PC-3 (cell line): ENCODE measurements at regions of chr5 and their contacts with region 1.

Region 1: GRCh38 chr5:177113566-177114424 is 19.8 kb upstream of the NSD1 start:
- DNase-seq: peak; percentile 89
- ATAC-seq: peak; percentile 77
- H3K4me3 ChIP-seq: no peak overlapping the region
- H3K27ac ChIP-seq: no peak overlapping the region
- H3K4me1 ChIP-seq: no peaks in the 10 kb centered on the region
- H3K27me3 ChIP-seq: no peaks in the 10 kb centered on the region
- CTCF ChIP-seq: peak; percentile 98

Region 2: DNA sequence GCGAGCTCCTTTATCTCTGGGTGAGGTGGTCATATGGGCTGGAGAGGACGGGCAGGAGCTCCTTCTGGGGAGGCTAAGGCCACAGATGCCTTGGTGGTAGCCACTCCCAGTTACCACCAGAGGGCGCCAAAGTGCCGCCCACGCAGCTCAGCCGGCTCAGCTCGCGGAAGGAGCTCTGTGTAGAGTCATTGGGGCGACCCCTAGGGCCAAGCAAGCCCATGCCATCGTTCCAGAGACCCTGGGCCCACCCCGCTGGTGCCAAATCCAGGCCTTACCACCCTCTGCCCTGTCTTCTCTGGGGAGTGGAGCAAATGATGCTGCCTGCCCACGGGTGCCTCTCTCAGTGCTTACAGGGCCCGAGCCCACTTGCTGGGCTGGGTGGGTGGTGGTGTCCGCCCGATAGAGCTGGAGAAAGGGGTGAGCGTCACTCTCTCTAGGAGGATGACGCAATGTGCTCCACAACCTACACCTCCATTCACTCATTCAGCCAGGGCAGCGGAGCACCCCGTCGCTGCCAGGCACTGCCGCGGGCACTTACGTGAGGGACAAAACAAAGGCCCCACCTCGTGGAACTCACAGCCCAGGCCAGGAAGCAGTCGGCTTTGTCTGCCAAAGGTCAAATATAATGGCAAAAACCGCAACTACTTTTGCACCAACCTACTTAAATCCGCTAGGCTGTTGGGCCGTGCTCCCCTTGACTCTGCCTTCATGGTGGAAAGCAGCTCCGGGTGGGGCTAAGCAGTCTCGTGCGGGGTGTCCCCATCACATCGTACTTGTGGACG is 452.7 kb before region 1 on chr5:
- CTCF ChIA-PET with region 1: interaction called, 4 read pairs
- POLR2A ChIA-PET with region 1: no interaction called
- intact Hi-C with region 1: loop called (anchors 5 kb)
- DNase-seq: peak; percentile 82
- ATAC-seq: peak; percentile 92
- H3K4me3 ChIP-seq: no peak overlapping the region
- H3K27ac ChIP-seq: no peak overlapping the region
- H3K4me1 ChIP-seq: no peaks in the 10 kb centered on the region
- H3K27me3 ChIP-seq: no peaks in the 10 kb centered on the region
- CTCF ChIP-seq: peak; percentile 92

Region 3: GRCh38 chr5:177071666-177072385 is 42.0 kb before region 1 on chr5:
- CTCF ChIA-PET with region 1: interaction called, 19 read pairs
- POLR2A ChIA-PET with region 1: no interaction called
- intact Hi-C with region 1: loop called (anchors 1 kb)
- DNase-seq: peak; percentile 96
- ATAC-seq: peak; percentile 97
- H3K4me3 ChIP-seq: no peak overlapping the region
- H3K27ac ChIP-seq: no peak overlapping the region
- H3K4me1 ChIP-seq: no peaks in the 10 kb centered on the region
- H3K27me3 ChIP-seq: no peaks in the 10 kb centered on the region
- CTCF ChIP-seq: peak; percentile 96

Region 4: GRCh38 chr5:177133091-177133852 is 19.5 kb after region 1 on chr5 and contains the start of gene NSD1:
- CTCF ChIA-PET with region 1: interaction called, 8 read pairs
- POLR2A ChIA-PET with region 1: interaction called, 6 read pairs
- intact Hi-C with region 1: loop called (anchors 2 kb)
- DNase-seq: peak; percentile 75
- ATAC-seq: peak; percentile 60
- H3K4me3 ChIP-seq: peak within 1 kb of the TSS; percentile 79
- H3K27ac ChIP-seq: peak within 1 kb of the TSS; percentile 35
- H3K4me1 ChIP-seq: peaks cover 31% of the 10 kb centered on the region
- H3K27me3 ChIP-seq: no peaks in the 10 kb centered on the region
- CTCF ChIP-seq: no peak
- total RNA-seq, gene NSD1: 48.9 and 70.5 TPM in 2 replicates

Region 5: DNA sequence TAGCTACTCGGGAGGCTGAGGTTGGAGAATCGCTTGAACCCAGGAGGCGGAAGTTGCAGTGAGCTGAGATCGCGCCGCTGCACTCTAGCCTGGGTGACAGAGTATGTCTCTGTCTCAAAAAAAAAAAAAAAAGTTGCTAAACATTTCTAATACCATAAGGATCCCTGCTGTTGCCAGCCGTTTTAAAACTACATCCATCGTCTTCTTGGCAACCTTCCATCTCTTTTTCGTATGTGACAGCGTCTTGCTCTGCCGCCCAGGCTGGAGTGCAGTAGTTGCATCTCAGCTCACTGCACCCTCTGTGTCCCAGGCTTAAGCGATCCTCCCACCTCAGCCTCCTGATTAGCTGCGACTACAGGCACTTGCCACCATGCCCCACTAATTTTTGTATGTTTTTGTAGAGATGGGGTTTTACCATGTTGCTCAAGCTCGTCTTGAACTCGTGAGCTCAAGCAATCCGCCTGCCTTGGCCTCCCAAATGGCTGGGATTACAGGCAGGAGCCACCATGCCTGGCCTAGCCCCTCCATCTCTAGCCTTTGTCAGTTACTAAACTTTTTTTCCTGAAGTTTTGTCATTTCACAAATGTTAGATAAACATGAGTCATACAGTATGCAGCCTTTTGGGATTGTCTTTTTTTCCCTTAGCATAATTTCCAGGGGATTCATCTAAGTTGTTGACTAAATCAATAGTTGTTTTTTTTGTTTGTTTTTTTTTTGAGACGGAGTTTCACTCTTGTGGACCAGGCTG is 33.3 kb after region 1 on chr5:
- CTCF ChIA-PET with region 1: no interaction called
- POLR2A ChIA-PET with region 1: no interaction called
- intact Hi-C with region 1: no loop called
- DNase-seq: peak; percentile 44
- ATAC-seq: peak; percentile 75
- H3K4me3 ChIP-seq: no peak overlapping the region
- H3K27ac ChIP-seq: no peak overlapping the region
- H3K4me1 ChIP-seq: peaks cover 6% of the 10 kb centered on the region; the same call in 1 of the 2 replicates
- H3K27me3 ChIP-seq: no peaks in the 10 kb centered on the region
- CTCF ChIP-seq: no peak

Region 6: GRCh38 chr5:177194274-177194673 is 80.5 kb after region 1 on chr5:
- CTCF ChIA-PET with region 1: interaction called, 10 read pairs
- POLR2A ChIA-PET with region 1: no interaction called
- intact Hi-C with region 1: no loop called
- DNase-seq: peak; percentile 94
- ATAC-seq: peak; percentile 97
- H3K4me3 ChIP-seq: no peak overlapping the region
- H3K27ac ChIP-seq: peak overlapping the region; percentile 36; the same call in 1 of the 2 replicates
- H3K4me1 ChIP-seq: peaks cover 17% of the 10 kb centered on the region
- H3K27me3 ChIP-seq: no peaks in the 10 kb centered on the region
- CTCF ChIP-seq: no peak

Region 7: DNA sequence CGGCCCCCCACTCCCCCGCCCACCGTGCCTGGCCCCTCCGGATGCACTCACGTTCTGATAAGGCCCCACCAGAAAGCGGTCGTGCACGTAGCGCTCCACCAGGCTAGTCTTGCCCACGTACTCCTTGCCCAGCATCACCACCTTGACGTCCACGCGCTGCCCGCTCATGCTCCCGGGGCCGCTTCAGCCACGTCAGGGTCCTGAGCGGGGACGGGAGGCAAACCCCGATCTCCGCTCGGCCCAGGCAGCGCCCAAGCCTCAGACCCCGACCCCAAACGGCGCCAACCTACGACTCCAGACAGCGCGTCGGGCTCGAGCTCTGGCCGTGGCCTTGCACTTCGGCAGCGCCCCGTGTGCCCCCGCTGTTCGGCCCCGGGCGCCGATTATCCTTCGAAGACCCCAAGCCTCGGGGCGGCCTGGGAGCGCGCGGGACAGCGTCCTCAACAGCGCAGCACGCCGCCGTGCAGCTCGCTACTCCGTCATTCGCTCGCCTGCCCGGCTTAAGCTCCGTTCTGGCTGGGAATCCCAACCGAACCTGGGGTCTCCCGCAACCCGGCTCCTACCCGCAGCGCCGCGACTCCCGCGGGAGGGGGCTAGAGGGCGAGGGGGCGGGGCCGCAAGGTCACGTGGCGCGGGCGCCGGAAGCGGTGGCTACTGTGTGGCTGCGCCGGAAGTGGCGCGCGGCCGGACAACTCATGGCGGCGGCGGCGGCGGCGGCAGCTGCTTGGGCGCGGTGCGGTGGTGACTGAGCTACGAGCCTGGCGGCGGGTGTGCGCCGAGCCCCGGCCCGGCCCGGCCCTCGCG is 189.5 kb after region 1 on chr5 and contains the starts of genes PRELID1 and RAB24:
- CTCF ChIA-PET with region 1: interaction called, 5 read pairs
- POLR2A ChIA-PET with region 1: no interaction called
- intact Hi-C with region 1: loop called (anchors 1 kb)
- DNase-seq: peak; percentile 89
- ATAC-seq: peak; percentile 27
- H3K4me3 ChIP-seq: peak within 1 kb of the TSS; percentile 86
- H3K27ac ChIP-seq: peak within 1 kb of the TSS; percentile 92
- H3K4me1 ChIP-seq: peaks cover 53% of the 10 kb centered on the region
- H3K27me3 ChIP-seq: no peaks in the 10 kb centered on the region
- CTCF ChIP-seq: peak; percentile 46
- total RNA-seq, gene PRELID1: 496 and 505 TPM in 2 replicates
- total RNA-seq, gene RAB24: 40.3 and 41.1 TPM in 2 replicates

Region 8: GRCh38 chr5:177336112-177336511 is 222.3 kb after region 1 on chr5:
- CTCF ChIA-PET with region 1: no interaction called
- POLR2A ChIA-PET with region 1: no interaction called
- intact Hi-C with region 1: no loop called
- DNase-seq: peak; percentile 53
- ATAC-seq: peak; percentile 84
- H3K4me3 ChIP-seq: no peak overlapping the region
- H3K27ac ChIP-seq: no peak overlapping the region
- H3K4me1 ChIP-seq: no peaks in the 10 kb centered on the region
- H3K27me3 ChIP-seq: no peaks in the 10 kb centered on the region
- CTCF ChIP-seq: peak; percentile 84

Region 9: DNA sequence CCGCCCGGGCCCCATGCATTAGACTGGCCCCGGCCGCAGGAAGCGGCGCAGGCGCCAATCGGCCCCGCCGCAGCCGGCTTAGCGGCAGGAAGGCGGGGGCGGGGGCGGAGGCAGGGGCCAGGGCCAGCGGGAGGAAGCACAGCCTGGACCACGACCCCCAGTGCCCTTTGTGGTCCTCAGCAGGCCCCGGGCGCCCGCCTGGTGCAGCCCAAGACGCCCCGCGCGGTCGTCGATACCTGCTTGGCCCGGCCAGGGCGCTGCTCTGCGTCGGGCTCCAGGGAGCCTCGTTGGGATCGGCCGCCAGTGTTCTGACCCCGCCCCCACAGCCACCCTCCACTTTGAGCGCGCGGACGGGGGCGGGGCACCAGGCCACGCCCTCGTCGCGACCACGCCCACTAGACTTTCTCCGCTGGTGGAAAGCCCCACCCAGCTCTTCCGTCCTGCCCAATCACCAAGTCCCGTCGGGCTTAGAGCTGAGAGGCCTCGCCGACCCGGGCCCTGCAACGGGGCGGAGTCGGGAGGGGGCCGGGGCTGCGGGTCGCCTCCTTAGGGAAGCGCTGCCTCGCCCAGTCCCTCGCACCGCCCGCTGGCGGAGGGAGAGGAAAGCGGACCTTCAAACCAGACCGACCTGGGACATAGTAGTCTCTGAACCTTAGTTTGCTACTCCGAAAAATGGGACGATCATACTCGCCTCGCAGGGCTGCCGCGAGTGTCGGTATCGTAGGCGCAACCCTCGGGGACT is 383.7 kb after region 1 on chr5 and contains the start of gene PDLIM7:
- CTCF ChIA-PET with region 1: no interaction called
- POLR2A ChIA-PET with region 1: no interaction called
- intact Hi-C with region 1: loop called (anchors 5 kb)
- DNase-seq: peak; percentile 98
- ATAC-seq: peak; percentile 66
- H3K4me3 ChIP-seq: peak within 1 kb of the TSS; percentile 76
- H3K27ac ChIP-seq: peak within 1 kb of the TSS; percentile 93
- H3K4me1 ChIP-seq: peaks cover 41% of the 10 kb centered on the region
- H3K27me3 ChIP-seq: no peaks in the 10 kb centered on the region
- CTCF ChIP-seq: peak; percentile 24; the same call in 1 of the 2 replicates
- total RNA-seq, gene PDLIM7: 159 and 195 TPM in 2 replicates